ENCODE measurements at regions of chr18 and their contacts with region 1.

Region 1: GRCh38 chr18:13381944-13382365 is 163.4 kb downstream of the LDLRAD4 start:
- DNase-seq: peak; percentile 91
- ATAC-seq: peak; percentile 93
- H3K4me3 ChIP-seq: no peak overlapping the region
- H3K27ac ChIP-seq: peak overlapping the region; percentile 78 to 86
- H3K4me1 ChIP-seq: peaks cover 0 to 9% of the 10 kb centered on the region in 2 donors
- H3K27me3 ChIP-seq: no peaks in the 10 kb centered on the region

Region 2: DNA sequence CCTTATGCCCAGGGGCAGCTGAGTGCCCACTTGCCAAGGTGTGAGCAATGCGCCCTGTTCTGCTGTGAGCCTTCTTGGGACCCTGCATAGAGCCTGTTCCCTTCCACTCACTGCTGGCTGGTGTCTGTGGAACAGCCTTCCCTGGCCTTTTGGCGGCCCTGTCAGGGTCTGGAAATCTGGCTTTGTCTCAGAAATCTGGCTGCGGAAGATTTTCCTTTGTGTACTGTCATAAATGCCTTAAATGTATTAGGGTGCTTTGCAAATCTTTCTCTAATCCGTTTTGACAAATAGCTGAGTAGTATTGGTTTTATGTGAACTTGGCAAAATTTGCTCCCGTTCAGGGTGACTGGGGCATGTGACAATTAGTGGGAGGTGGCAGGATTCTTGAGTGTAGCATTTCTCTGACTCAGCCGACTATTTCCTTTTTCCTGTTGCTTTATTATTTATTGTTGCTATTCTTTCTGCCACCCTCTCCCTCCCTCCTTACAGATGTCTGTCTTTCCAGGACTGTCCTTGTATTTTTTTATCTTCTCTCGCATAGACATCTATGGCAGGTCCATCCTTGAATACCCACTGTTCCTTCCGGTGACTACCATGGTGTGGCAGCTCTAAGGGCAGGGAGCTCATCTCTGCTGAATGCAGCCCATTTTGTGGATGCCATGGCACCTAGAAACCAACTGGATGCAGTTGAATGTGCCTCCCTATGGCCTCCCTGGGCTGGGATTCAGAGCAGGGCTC is 121.6 kb before region 1 on chr18:
- intact Hi-C with region 1: loop called in 1 of 2 experiments (anchors 5 kb)
- DNase-seq: no peak
- ATAC-seq: peak; percentile 66
- H3K4me3 ChIP-seq: no peak overlapping the region
- H3K27ac ChIP-seq: peak overlapping the region; percentile 15 to 98
- H3K4me1 ChIP-seq: peaks cover 3 to 5% of the 10 kb centered on the region in 2 donors
- H3K27me3 ChIP-seq: no peaks in the 10 kb centered on the region

Region 3: GRCh38 chr18:13420969-13421686 is 39.2 kb after region 1 on chr18:
- intact Hi-C with region 1: loop called in 1 of 2 experiments (anchors 5 kb)
- DNase-seq: no peak
- ATAC-seq: no peak
- H3K4me3 ChIP-seq: no peak overlapping the region
- H3K27ac ChIP-seq: no peak overlapping the region
- H3K4me1 ChIP-seq: peaks cover under 1 to 2% of the 10 kb centered on the region in 2 donors
- H3K27me3 ChIP-seq: no peaks in the 10 kb centered on the region

Region 4: GRCh38 chr18:13500227-13500865 is 118.4 kb after region 1 on chr18:
- intact Hi-C with region 1: loop called (anchors 5 kb)
- DNase-seq: no peak
- ATAC-seq: peak; percentile 68
- H3K4me3 ChIP-seq: no peak overlapping the region
- H3K27ac ChIP-seq: peak overlapping the region; percentile 53 to 96
- H3K4me1 ChIP-seq: peaks cover 3 to 5% of the 10 kb centered on the region in 2 donors
- H3K27me3 ChIP-seq: no peaks in the 10 kb centered on the region

Region 5: DNA sequence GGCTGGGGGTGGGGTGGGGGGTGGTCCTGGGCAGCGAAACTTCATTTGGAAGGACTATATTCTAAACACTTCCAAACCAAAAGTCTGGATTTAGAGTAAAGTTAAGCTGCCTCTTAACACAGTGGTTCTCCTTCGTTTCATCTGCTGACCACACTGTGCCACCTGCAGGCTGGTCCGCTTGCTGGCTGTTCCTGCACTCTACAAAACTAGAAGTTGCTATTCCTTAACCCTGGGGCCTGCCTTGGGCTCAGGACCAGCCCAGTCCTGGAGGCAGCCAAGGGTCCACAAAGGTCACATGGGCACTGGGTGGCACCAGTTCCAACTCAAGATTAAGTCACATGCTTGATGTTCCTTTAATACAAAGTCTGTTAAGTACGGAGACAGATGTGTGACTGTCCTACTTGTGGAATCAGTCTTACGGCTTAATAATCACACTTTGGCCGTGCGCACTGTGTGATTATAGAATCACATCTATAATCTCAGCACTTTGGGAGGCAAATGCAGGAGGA is 149.0 kb after region 1 on chr18:
- intact Hi-C with region 1: loop called in 1 of 2 experiments (anchors 10 kb)
- DNase-seq: peak; percentile 80 to 89
- ATAC-seq: peak; percentile 89
- H3K4me3 ChIP-seq: no peak overlapping the region
- H3K27ac ChIP-seq: no peak overlapping the region
- H3K4me1 ChIP-seq: no peaks in the 10 kb centered on the region
- H3K27me3 ChIP-seq: no peaks in the 10 kb centered on the region

Measured in aorta (tissue), 5 donors.